ENCODE measurements at regions of chr1 and their contacts with region 1.

Region 1: GRCh38 chr1:8848663-8849386 is 29.7 kb downstream of the ENO1 start:
- DNase-seq: peak; percentile 82
- H3K27ac ChIP-seq: peak overlapping the region; percentile 66
- CTCF ChIP-seq: peak; percentile 82

Region 2: DNA sequence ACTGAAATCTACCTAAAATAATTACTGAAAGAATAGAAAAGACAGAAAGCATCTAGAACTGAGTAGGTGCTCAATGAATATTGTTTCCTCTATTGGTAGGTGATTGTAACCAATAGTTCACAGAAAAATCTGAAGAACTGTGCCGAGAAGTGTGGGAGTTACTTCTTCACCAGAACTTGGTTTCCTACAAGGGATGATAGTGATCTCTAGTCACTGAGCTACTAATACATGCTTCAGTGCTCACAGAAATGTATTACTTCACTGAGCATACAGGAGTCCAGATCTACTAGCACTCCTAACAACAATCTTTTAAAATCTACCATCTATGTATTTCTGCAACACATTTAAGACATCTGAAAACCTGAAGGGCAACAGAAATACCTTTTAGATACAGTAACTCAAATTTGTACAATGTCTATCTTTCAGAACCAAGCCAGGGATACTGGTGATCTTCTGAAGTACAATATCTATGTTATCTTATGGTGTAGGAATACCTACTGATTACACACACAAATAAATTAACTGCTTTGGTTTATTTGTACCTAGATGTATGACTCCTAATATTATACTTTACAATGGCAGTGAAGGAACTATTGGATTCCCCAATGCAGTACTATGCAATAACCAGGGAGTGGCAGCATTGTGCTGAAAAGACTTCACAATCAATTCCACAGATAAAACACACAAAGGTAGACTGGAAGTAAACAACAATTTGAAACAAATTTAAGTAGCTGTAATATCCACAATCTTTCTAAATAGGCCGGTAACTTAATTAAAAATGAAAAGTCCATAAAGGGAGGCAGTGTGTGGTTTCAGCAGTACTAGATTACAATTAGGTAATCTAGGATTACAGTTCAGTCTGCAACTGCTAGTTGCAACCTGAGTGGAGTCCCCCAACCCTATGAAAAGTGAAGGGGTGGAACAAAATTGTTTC is 287.9 kb before region 1 on chr1:
- CTCF ChIA-PET with region 1: interaction called, 11 read pairs
- POLR2A ChIA-PET with region 1: no interaction called
- DNase-seq: peak; percentile 41
- H3K27ac ChIP-seq: no peak overlapping the region
- CTCF ChIP-seq: peak; percentile 93

Region 3: GRCh38 chr1:8693107-8693506 is 155.7 kb before region 1 on chr1:
- CTCF ChIA-PET with region 1: no interaction called
- POLR2A ChIA-PET with region 1: no interaction called
- DNase-seq: no peak
- H3K27ac ChIP-seq: no peak overlapping the region
- CTCF ChIP-seq: no peak

Region 4: DNA sequence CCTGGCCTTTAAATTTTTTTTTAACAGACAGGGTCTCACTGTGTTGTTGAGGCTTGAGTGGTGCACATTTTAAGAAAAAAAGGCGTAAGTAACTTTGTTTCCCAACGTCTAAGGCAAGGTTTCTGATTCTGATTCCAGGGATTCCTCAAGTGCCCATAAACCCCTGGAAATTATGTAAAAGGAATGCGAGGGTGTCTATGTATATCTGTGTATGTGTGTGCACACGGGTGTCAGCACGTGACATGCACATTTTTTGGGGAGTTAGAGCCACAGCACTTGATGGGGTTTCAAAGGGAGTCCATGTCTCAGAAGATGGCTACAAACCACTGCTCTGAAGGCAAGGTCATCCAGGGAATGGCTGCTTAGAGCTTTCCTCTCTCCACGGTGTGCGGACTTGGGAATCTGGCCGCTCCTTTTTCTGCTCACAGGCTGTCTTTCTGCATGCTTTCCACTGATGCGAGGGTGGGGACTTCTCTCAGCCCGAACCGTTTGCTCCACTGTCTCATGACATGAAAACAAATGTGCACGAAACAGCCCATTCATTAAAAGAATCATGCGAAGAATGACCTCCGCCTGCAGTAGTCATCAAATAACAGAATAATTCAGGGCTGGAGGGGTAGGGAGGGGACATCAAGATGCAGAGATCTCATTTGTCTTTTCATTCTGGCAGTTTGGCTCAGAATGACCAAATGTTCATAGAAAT is 12.7 kb before region 1 on chr1:
- CTCF ChIA-PET with region 1: interaction called, 13 read pairs
- POLR2A ChIA-PET with region 1: no interaction called
- DNase-seq: no peak
- H3K27ac ChIP-seq: no peak overlapping the region
- CTCF ChIP-seq: no peak

Region 5: DNA sequence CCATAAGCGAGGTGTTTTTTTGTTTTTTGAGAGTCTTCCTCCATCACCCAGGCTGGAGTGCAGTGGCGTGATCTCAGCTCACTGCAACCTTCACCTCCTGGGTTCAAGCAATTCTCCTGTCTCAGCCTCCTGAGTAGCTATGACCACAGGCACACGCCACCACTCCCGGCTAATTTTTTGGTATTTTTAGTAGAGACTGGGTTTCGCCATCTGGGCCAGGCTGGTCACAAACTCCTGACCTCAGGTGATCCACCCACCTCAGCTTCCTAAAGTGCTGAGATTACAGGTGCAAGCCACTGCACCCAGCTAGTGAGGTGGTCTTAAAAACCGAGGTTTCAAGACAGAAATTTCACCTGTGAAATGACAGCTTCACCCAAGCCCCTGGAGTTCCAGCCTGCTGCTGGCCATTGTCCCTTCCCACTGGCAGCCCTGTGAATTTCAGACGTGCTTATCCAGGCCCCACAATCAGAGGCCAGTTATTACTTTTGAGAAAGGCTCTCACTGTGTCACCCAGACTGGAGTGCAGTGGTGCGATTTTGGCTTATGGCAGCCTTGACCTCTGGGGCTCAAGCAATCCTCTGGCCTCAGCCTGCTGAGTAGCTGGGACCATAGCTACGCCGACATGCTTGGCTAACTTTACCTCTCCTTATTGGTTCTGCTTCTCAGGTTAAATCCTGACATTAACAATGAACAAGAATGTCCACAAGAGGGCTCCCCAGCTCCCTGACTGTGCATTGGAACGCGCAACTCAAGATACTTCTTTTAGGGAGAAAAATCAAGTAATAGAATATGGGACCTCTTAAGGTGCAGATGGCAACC is 10.3 kb after region 1 on chr1:
- CTCF ChIA-PET with region 1: interaction called, 15 read pairs
- POLR2A ChIA-PET with region 1: no interaction called
- DNase-seq: no peak
- H3K27ac ChIP-seq: peak overlapping the region; percentile 68
- CTCF ChIP-seq: peak; percentile 75

Region 6: DNA sequence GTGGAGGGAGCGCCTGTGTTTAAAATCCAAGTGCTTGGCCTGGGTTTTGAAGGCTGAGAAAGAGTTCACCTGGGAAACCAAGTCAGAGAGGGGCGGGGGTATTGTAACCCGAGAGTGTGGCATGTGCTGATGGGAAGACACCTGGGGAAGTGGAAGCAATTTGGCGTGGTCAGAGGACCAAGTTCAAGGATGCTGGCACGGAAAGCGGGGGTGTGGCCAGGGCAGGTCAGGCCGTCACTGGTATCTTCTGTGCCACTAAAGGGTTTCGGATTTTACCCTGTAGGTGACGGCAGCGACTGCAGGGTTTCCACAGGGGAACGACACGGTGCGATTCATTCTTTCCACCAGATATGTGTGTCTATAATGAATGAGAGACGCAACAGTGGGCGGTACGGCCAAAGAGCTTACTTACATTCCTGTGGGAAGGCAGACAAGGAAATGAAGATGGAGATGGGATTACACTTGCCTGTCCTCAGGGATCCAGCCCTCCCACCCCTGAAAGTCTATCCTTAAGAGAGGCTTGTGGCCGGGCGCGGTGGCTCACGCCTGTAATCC is 128.1 kb after region 1 on chr1:
- CTCF ChIA-PET with region 1: interaction called, 10 read pairs
- POLR2A ChIA-PET with region 1: no interaction called
- DNase-seq: no peak
- H3K27ac ChIP-seq: no peak overlapping the region
- CTCF ChIP-seq: no peak

Region 7: GRCh38 chr1:9317591-9318417 is 469.0 kb after region 1 on chr1:
- CTCF ChIA-PET with region 1: no interaction called
- POLR2A ChIA-PET with region 1: no interaction called
- DNase-seq: peak; percentile 40
- H3K27ac ChIP-seq: peak overlapping the region; percentile 83
- CTCF ChIP-seq: no peak